HepG2 (cell line): ENCODE measurements at regions of chr14 and their contacts with region 1.

Region 1: GRCh38 chr14:24013654-24014514 is 25.2 kb downstream of the DHRS4L2 start:
- DNase-seq: peak; percentile 92
- ATAC-seq: peak; percentile 98
- H3K4me3 ChIP-seq: no peak overlapping the region
- H3K27ac ChIP-seq: no peak overlapping the region
- H3K4me1 ChIP-seq: peaks cover 53% of the 10 kb centered on the region
- H3K27me3 ChIP-seq: no peaks in the 10 kb centered on the region
- CTCF ChIP-seq: peak; percentile 100
- EP300 ChIP-seq: peak in 1 of 2 experiments; percentile 11; a peak in 1 of 4 replicates
- POLR2A ChIP-seq: no peak
- RAD21 ChIP-seq: peak; percentile 100

Region 2: DNA sequence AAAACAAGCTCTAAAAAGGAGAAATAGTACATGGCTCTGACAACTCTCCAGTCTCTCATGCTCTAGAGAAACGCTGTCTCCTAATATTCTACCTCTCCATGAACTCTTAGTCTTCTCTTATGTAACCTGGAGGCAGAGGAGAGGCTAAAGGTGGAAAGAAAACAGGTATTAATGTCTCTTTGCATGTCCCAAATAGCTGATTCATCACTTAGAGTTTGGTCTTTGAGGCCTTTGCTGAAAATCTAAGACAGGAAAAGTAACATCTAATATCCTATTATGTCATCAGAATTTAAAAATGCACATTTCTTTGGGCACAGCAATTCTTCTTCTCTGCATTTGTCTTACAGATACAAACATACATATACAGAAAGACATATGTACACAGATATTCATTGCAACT is 250.5 kb before region 1 on chr14:
- CTCF ChIA-PET with region 1: no interaction called
- POLR2A ChIA-PET with region 1: no interaction called
- in situ Hi-C with region 1: no loop called
- intact Hi-C with region 1: no loop called
- DNase-seq: no peak
- ATAC-seq: no peak
- H3K4me3 ChIP-seq: no peak overlapping the region
- H3K27ac ChIP-seq: no peak overlapping the region
- H3K4me1 ChIP-seq: no peaks in the 10 kb centered on the region
- H3K27me3 ChIP-seq: no peaks in the 10 kb centered on the region
- CTCF ChIP-seq: no peak
- EP300 ChIP-seq: no peak
- POLR2A ChIP-seq: no peak
- RAD21 ChIP-seq: no peak

Region 3: GRCh38 chr14:23984891-23985602 is 28.8 kb before region 1 on chr14:
- CTCF ChIA-PET with region 1: no interaction called
- POLR2A ChIA-PET with region 1: no interaction called
- in situ Hi-C with region 1: no loop called
- intact Hi-C with region 1: loop called (anchors 1 kb)
- DNase-seq: peak; percentile 36
- ATAC-seq: no peak
- H3K4me3 ChIP-seq: no peak overlapping the region
- H3K27ac ChIP-seq: no peak overlapping the region
- H3K4me1 ChIP-seq: peaks cover 82% of the 10 kb centered on the region
- H3K27me3 ChIP-seq: no peaks in the 10 kb centered on the region
- CTCF ChIP-seq: no peak
- EP300 ChIP-seq: no peak
- POLR2A ChIP-seq: no peak
- RAD21 ChIP-seq: no peak

Region 4: DNA sequence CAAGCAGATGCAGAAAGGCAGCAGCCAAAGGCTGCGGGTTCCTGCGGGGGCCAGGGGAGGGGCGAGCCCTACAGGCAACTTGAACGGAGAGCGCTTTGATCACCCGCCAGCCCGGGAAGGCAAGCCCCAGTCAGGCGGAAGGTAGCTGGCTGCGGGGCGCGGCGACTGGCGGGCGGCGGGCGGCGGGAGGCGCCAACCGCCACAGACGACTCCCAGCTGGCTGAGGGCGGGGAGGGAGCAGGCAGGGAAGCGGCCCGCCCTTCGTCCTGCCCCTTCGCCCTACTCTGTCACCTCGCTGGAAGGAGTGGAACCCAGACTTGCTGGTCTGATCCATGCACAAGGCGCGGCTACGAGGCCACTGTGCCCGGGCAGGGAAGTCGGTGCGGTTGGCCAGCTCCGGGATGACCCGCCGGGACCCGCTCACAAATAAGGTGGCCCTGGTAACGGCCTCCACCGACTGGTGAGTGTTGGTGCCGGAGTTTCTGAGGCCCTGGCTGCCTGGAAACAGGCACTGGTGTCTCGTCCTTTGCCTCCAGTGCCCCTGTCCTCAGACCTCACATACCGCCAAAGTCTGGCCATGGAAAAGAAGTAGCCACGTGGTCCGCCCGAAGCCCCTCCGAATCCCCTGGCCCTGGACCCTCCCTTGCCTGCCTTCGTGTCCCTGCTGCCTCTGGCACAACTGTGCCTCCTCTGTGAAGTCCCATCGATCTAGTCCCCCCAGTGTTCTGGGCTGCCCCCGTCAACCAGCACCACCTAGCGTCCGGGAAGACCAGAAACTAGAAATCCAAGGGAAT is 22.5 kb after region 1 on chr14:
- CTCF ChIA-PET with region 1: interaction called, 85 read pairs
- POLR2A ChIA-PET with region 1: interaction called, 3 read pairs
- in situ Hi-C with region 1: no loop called
- intact Hi-C with region 1: loop called (anchors 1 kb)
- DNase-seq: peak; percentile 80
- ATAC-seq: peak; percentile 78
- H3K4me3 ChIP-seq: peak overlapping the region; percentile 31 to 68 (median 62); a peak in 5 of 6 replicates
- H3K27ac ChIP-seq: peak overlapping the region; percentile 57
- H3K4me1 ChIP-seq: peaks cover 43% of the 10 kb centered on the region
- H3K27me3 ChIP-seq: peaks cover 0 to 4% of the 10 kb centered on the region in 2 experiments; a peak in 1 of 5 replicates
- CTCF ChIP-seq: peak; percentile 98
- EP300 ChIP-seq: peak in 1 of 2 experiments; percentile 46; a peak in 1 of 4 replicates
- POLR2A ChIP-seq: peak; percentile 70 to 84
- RAD21 ChIP-seq: peak; percentile 87

Region 5: GRCh38 chr14:24051789-24052655 is 38.1 kb after region 1 on chr14 and contains the start of gene CARMIL3:
- CTCF ChIA-PET with region 1: interaction called, 4 read pairs
- POLR2A ChIA-PET with region 1: no interaction called
- in situ Hi-C with region 1: loop called (anchors 5 kb)
- intact Hi-C with region 1: loop called (anchors 1 kb)
- DNase-seq: peak; percentile 56
- ATAC-seq: peak; percentile 85
- H3K4me3 ChIP-seq: peak within 1 kb of the TSS; percentile 61 to 85 (median 71)
- H3K27ac ChIP-seq: no peak within 1 kb of the TSS
- H3K4me1 ChIP-seq: peaks cover 31% of the 10 kb centered on the region
- H3K27me3 ChIP-seq: peaks cover 20 to 77% of the 10 kb centered on the region in 2 experiments
- CTCF ChIP-seq: 0 out of 2 replicates have a peak, but pooled peaks have one; percentile 7
- EP300 ChIP-seq: no peak
- POLR2A ChIP-seq: no peak
- RAD21 ChIP-seq: peak; percentile 35; the same call in 1 of the 2 replicates
- total RNA-seq, gene CARMIL3: 0.13 and 0.27 TPM in 2 replicates

Region 6: DNA sequence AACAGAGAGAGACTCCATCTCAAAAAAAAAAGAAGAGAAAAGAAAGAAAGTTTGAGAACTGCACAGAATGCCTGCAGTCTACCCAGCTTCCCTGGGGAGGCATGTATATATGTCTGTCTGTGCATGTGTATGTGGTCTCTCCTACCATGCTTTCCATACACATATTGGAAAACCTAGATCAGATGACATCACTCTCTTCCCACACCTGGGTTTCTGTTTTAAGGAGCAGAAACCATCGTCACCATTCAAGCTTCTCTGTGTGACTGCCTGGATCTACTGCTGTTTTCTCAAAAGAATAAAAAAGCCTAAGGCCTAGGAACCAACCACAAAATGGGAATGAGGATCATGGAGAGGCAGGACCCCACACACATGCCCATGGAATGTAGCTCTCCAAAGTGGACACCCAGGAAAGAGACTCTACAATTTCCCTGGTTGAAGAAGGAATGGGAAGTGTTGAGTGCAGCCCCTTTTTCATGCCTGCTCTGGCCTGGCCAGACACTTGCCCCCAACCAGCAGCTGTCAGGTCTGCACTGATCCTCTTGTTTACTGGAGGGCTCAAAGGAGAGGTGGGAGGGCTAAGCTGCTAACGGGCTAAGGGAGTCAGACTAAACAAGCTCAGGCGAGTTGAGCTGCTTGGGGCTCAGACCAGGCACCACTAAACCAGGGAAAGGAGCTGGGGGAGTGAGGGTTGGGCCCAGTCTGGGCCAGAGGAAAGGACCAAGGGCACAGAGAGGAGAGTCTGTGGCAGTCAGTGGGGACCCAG is 72.5 kb after region 1 on chr14:
- CTCF ChIA-PET with region 1: interaction called, 86 read pairs
- POLR2A ChIA-PET with region 1: interaction called, 5 read pairs
- in situ Hi-C with region 1: loop called (anchors 5 kb)
- intact Hi-C with region 1: loop called (anchors 1 kb)
- DNase-seq: no peak
- ATAC-seq: no peak
- H3K4me3 ChIP-seq: no peak overlapping the region
- H3K27ac ChIP-seq: no peak overlapping the region
- H3K4me1 ChIP-seq: peaks cover 39% of the 10 kb centered on the region
- H3K27me3 ChIP-seq: peaks cover 10 to 45% of the 10 kb centered on the region in 2 experiments
- CTCF ChIP-seq: no peak
- EP300 ChIP-seq: no peak
- POLR2A ChIP-seq: no peak
- RAD21 ChIP-seq: no peak

Region 7: GRCh38 chr14:24108336-24108874 is 94.5 kb after region 1 on chr14:
- CTCF ChIA-PET with region 1: interaction called, 28 read pairs
- POLR2A ChIA-PET with region 1: interaction called, 3 read pairs
- in situ Hi-C with region 1: no loop called
- intact Hi-C with region 1: loop called (anchors 1 kb)
- DNase-seq: no peak
- ATAC-seq: no peak
- H3K4me3 ChIP-seq: no peak overlapping the region
- H3K27ac ChIP-seq: no peak overlapping the region
- H3K4me1 ChIP-seq: peaks cover 60% of the 10 kb centered on the region
- H3K27me3 ChIP-seq: no peaks in the 10 kb centered on the region
- CTCF ChIP-seq: no peak
- EP300 ChIP-seq: no peak
- POLR2A ChIP-seq: no peak
- RAD21 ChIP-seq: no peak